PC-9 (cell line): ENCODE measurements at regions of chr1 and their contacts with region 1.

Region 1: GRCh38 chr1:37778654-37779053 is 13.7 kb upstream of the EPHA10 start:
- DNase-seq: no peak
- H3K4me3 ChIP-seq: no peak overlapping the region
- H3K27ac ChIP-seq: no peak overlapping the region
- H3K4me1 ChIP-seq: no peaks in the 10 kb centered on the region
- H3K27me3 ChIP-seq: peaks cover 11% of the 10 kb centered on the region; the same call in 1 of the 2 replicates
- CTCF ChIP-seq: no peak

Region 2: GRCh38 chr1:37822906-37823815 is 44.5 kb after region 1 on chr1:
- CTCF ChIA-PET with region 1: no interaction called
- POLR2A ChIA-PET with region 1: interaction called, 13 read pairs
- intact Hi-C with region 1: no loop called
- DNase-seq: no peak
- H3K4me3 ChIP-seq: no peak overlapping the region
- H3K27ac ChIP-seq: no peak overlapping the region
- H3K4me1 ChIP-seq: no peaks in the 10 kb centered on the region
- H3K27me3 ChIP-seq: no peaks in the 10 kb centered on the region
- CTCF ChIP-seq: no peak

Region 3: GRCh38 chr1:39354572-39354971 is 1575.9 kb after region 1 on chr1:
- CTCF ChIA-PET with region 1: no interaction called
- POLR2A ChIA-PET with region 1: no interaction called
- intact Hi-C with region 1: no loop called
- DNase-seq: no peak
- H3K4me3 ChIP-seq: no peak overlapping the region
- H3K27ac ChIP-seq: no peak overlapping the region
- H3K4me1 ChIP-seq: no peaks in the 10 kb centered on the region
- H3K27me3 ChIP-seq: no peaks in the 10 kb centered on the region
- CTCF ChIP-seq: no peak